ENCODE measurements at regions of chr3 and their contacts with region 1.

Region 1: DNA sequence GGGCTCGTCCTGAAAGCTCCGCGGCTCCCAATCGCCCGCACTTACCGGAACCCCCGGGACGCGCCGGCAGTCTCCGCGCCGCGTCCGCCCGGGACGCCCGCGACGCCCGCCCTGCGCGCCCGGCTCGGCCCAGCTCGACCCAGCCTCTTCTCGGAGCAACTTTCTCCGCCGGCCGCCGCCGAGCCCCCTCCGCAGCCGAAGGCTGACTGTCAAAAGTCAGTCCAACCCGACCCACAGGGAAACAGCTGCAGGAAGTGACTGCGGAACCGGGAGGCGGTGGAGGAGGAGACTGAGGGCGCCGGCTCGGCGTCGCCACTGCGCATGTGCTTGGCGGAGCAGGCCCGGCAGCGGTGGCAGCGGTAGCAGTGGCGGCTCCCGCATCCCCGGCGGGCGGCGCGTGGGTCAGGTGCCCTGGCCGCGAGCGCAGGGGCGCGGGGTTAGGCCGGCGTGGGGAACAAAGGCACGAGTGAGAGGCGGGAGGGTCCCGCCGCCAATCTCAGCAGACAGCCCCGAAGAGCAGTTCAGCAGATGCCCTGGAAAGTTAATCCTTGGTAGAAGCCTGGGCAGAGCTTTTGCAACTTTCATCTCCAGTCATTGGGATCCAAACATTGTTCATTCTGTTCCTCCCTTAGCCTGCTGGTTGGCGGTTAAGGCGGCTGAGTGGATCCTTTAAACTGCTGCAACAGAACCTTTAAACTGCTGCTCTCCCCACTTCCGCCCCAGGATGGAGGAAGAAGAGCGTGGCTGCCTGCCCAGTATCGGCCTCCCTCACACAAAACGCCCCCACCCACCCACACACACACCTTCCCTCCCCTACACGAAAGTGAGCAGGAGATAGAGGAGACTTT is at the start of gene ZMAT3:
- DNase-seq: peak; percentile 76 to 87 (median 84)
- H3K4me3 ChIP-seq: peak within 1 kb of the TSS; percentile 88
- H3K4me3 Mint-ChIP-seq: peak within 1 kb of the TSS; percentile 93 to 99 (median 98)
- H3K27ac ChIP-seq: peak within 1 kb of the TSS; percentile 70
- H3K27ac Mint-ChIP-seq: peak within 1 kb of the TSS; percentile 85 to 97 (median 96)
- H3K4me1 ChIP-seq: peaks cover 41% of the 10 kb centered on the region
- H3K4me1 Mint-ChIP-seq: peaks cover 38 to 69% (median 51%) of the 10 kb centered on the region in 3 donors
- H3K27me3 ChIP-seq: no peaks in the 10 kb centered on the region
- H3K27me3 Mint-ChIP-seq: no peaks in the 10 kb centered on the region
- total RNA-seq, gene ZMAT3: 14.7 to 16.3 TPM

Region 2: DNA sequence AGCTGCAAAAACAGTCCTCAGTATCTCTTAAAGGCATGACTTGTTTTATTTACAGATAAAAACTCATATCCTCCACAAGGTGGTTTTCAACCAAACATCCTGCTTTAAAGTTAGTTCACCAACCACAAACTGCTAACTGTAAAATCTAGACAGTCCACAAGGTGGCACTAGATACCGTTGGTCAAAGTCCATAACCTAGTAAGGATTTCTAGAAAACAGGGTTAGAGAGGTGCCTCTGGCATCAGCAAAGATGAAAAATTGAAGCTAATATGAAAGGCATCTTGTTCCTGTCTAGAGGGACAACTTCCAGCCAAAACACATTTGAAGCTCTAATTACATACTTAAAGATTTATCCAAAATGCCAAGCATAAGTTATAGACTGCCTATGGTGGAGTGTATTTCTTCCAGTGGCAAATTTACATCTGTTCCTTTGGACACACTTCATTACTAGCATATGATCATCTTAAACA is 56.2 kb before region 1 on chr3:
- CTCF ChIA-PET with region 1: interaction called, 12 read pairs
- POLR2A ChIA-PET with region 1: no interaction called
- DNase-seq: peak in 4 of 5 donors; percentile 30 to 75 (median 68)
- H3K4me3 ChIP-seq: no peak overlapping the region
- H3K4me3 Mint-ChIP-seq: no peak overlapping the region
- H3K27ac ChIP-seq: no peak overlapping the region
- H3K27ac Mint-ChIP-seq: no peak overlapping the region
- H3K4me1 ChIP-seq: peaks cover 10% of the 10 kb centered on the region
- H3K4me1 Mint-ChIP-seq: peaks cover 14 to 28% (median 21%) of the 10 kb centered on the region in 3 donors
- H3K27me3 ChIP-seq: no peaks in the 10 kb centered on the region
- H3K27me3 Mint-ChIP-seq: peaks cover 1 to 7% of the 10 kb centered on the region in 2 donors

Region 3: DNA sequence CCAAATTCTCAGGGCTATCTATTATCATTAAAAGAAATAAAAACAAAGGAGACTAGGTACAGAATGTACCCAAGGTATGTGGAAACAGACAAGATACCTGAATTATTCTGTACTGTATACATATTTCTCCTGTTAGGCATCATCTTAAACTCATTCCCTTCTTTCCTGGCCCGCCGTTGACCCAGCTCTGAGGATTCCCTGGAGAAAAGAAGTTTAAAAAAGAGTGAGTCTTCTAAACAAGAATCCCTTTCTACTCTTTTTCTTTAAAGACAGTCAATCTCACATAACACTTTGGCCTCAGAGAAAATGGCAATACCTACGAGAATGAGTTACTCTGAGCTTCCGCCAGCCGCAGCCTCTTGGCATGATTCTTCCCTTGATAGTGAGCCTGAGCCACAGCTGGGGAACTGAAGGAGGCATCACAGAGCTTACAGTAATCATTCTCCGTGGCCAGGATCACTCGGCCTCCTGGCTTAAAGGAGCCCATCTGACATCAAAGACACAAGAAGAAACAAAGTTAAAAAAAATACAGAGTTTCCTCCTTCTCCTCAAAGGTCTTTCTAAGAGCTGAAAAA is 44.4 kb before region 1 on chr3:
- CTCF ChIA-PET with region 1: no interaction called
- POLR2A ChIA-PET with region 1: interaction called, 11 read pairs
- DNase-seq: peak in 1 of 5 donors; percentile 32
- H3K4me3 ChIP-seq: no peak overlapping the region
- H3K4me3 Mint-ChIP-seq: no peak overlapping the region
- H3K27ac ChIP-seq: no peak overlapping the region
- H3K27ac Mint-ChIP-seq: peak overlapping the region in 2 of 8 donors; percentile 12 to 68
- H3K4me1 ChIP-seq: peaks cover 20% of the 10 kb centered on the region
- H3K4me1 Mint-ChIP-seq: no peaks in the 10 kb centered on the region
- H3K27me3 ChIP-seq: no peaks in the 10 kb centered on the region
- H3K27me3 Mint-ChIP-seq: no peaks in the 10 kb centered on the region

Measured in CD8-positive, alpha-beta memory T cell (primary cell).